Activated CD8-positive, alpha-beta T cell treated with anti-CD3 and anti-CD28 coated beads for 36 hours (primary cell): ENCODE measurements at regions of chr5 and their contacts with region 1.

Region 1: DNA sequence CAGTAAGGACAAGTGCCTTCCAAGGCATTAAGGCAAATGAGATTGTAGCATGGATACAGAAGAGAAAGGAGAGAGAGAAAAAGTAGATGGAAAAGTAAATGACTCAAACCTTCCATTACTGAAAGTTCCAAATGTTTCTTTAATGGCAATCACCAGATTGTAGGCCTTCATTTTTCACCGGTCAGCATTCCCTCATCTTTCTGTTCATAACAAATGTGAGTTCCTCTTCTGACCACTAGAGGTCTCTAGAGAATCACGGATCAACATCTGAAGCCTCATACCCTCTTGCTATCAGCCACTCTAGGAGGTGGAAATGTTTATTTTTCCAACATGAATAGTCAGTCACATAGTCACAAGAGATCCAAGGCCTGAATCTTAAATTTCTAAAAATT is 73.6 kb upstream of the RPS23 start:
- DNase-seq: no peak
- ATAC-seq: peak; percentile 57
- H3K4me3 Mint-ChIP-seq: no peak overlapping the region
- H3K27ac Mint-ChIP-seq: no peak overlapping the region
- H3K4me1 Mint-ChIP-seq: peaks cover 6% of the 10 kb centered on the region
- H3K27me3 Mint-ChIP-seq: no peaks in the 10 kb centered on the region
- CTCF ChIP-seq: peak; percentile 78

Region 2: DNA sequence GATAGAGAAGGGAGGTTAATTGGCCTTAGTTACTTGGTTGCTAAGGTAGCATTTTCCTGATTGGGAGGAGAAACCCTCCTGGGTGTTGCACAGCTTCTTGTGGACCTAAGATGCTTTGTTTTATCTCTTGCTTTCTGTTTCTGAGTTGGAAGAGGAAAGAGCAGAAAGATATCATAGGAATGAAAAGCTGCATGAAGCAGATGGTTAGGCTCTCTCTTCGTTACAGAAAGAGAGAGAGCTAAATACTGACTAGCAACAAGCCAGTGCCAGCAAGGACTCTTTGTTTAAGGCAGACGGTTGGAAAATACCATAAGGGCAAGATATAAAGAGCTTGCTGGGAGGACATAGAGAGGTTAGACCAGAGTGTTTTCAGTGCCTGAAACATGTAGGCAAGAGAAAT is 276.8 kb before region 1 on chr5:
- CTCF ChIA-PET with region 1: no interaction called
- POLR2A ChIA-PET with region 1: no interaction called
- intact Hi-C with region 1: no loop called
- DNase-seq: no peak
- ATAC-seq: no peak
- H3K4me3 Mint-ChIP-seq: no peak overlapping the region
- H3K27ac Mint-ChIP-seq: no peak overlapping the region
- H3K4me1 Mint-ChIP-seq: no peaks in the 10 kb centered on the region
- H3K27me3 Mint-ChIP-seq: no peaks in the 10 kb centered on the region
- CTCF ChIP-seq: no peak

Region 3: GRCh38 chr5:82319192-82319591 is 32.6 kb before region 1 on chr5:
- CTCF ChIA-PET with region 1: no interaction called
- POLR2A ChIA-PET with region 1: no interaction called
- intact Hi-C with region 1: no loop called
- DNase-seq: no peak
- ATAC-seq: no peak
- H3K4me3 Mint-ChIP-seq: no peak overlapping the region
- H3K27ac Mint-ChIP-seq: no peak overlapping the region
- H3K4me1 Mint-ChIP-seq: no peaks in the 10 kb centered on the region
- H3K27me3 Mint-ChIP-seq: peaks cover 24% of the 10 kb centered on the region
- CTCF ChIP-seq: no peak

Region 4: GRCh38 chr5:82334856-82335255 is 16.9 kb before region 1 on chr5:
- CTCF ChIA-PET with region 1: interaction called, 24 read pairs
- POLR2A ChIA-PET with region 1: no interaction called
- intact Hi-C with region 1: no loop called
- DNase-seq: no peak
- ATAC-seq: no peak
- H3K4me3 Mint-ChIP-seq: no peak overlapping the region
- H3K27ac Mint-ChIP-seq: no peak overlapping the region
- H3K4me1 Mint-ChIP-seq: no peaks in the 10 kb centered on the region
- H3K27me3 Mint-ChIP-seq: peaks cover 1% of the 10 kb centered on the region
- CTCF ChIP-seq: no peak

Region 5: GRCh38 chr5:82494942-82495341 is 143.2 kb after region 1 on chr5:
- CTCF ChIA-PET with region 1: interaction called, 4 read pairs
- POLR2A ChIA-PET with region 1: no interaction called
- intact Hi-C with region 1: loop called (anchors 10 kb)
- DNase-seq: no peak
- ATAC-seq: no peak
- H3K4me3 Mint-ChIP-seq: no peak overlapping the region
- H3K27ac Mint-ChIP-seq: no peak overlapping the region
- H3K4me1 Mint-ChIP-seq: peaks cover 2% of the 10 kb centered on the region
- H3K27me3 Mint-ChIP-seq: peaks cover 2% of the 10 kb centered on the region
- CTCF ChIP-seq: peak; percentile 13

Region 6: DNA sequence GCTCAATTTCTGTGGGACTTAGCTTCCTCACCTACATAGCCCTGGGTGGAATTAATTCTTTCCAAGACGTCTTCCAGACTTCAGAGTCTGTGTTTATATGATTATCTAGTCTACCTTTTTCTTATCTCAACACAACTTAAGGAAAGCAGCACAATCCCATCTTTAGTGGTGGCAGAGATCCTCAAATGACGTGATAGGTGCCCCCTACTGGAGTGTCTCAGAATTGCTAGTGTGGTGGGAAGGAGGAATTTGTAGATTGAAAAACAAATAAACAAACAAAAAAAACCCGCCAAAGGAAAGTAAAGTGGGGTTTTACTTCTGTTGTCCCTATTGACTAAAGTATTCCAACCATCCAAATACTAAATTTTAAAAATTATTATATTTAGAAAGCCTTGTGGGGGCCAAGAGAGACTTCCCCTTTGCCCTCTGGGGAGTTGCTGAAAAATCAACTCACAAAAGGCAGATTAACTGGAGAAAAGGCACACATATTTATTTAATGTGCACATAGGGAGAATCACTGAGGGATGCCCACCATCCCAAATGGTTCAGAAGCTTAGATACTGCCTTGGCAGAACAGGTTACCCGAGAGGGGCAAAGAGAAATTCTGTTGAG is 442.2 kb after region 1 on chr5:
- CTCF ChIA-PET with region 1: interaction called, 17 read pairs
- POLR2A ChIA-PET with region 1: no interaction called
- intact Hi-C with region 1: loop called (anchors 5 kb)
- DNase-seq: peak; percentile 60
- ATAC-seq: peak; percentile 37
- H3K4me3 Mint-ChIP-seq: no peak overlapping the region
- H3K27ac Mint-ChIP-seq: no peak overlapping the region
- H3K4me1 Mint-ChIP-seq: no peaks in the 10 kb centered on the region
- H3K27me3 Mint-ChIP-seq: no peaks in the 10 kb centered on the region
- CTCF ChIP-seq: peak; percentile 82

Region 7: GRCh38 chr5:83564069-83564749 is 1212.5 kb after region 1 on chr5:
- CTCF ChIA-PET with region 1: interaction called, 9 read pairs
- POLR2A ChIA-PET with region 1: no interaction called
- intact Hi-C with region 1: loop called (anchors 5 kb)
- DNase-seq: no peak
- ATAC-seq: no peak
- H3K4me3 Mint-ChIP-seq: no peak overlapping the region
- H3K27ac Mint-ChIP-seq: no peak overlapping the region
- H3K4me1 Mint-ChIP-seq: no peaks in the 10 kb centered on the region
- H3K27me3 Mint-ChIP-seq: peaks cover 13% of the 10 kb centered on the region
- CTCF ChIP-seq: peak; percentile 76